Ascending aorta (tissue), 2 donors: ENCODE measurements at regions of chr12 and their contacts with region 1.

Region 1: DNA sequence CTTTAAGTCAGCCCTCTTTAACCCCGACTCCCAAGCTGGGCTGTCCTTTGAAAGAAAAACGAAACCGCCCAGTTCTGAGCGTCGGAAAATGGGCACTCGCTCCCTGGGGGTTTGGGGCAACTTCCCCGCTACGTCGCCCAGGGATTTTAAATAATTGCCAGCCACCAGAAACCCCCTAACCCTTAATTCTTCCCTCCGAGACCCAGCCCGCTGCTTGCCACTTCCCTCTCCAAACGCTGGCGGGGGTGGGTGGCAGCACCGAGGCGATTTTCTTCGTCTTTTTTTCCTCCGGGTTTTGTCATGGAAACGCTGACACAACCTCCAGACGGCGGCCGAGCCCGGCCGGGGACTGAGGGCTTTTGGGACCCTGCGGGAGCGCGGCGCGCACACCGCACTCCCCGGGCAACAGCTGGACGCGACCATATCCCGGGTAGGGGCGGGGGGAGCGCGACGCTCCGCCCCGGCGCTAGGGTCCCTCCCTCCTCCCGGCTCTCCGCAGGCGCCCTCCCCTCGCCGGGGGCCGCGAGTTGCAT is at the start of gene CHST11:
- DNase-seq: peak; percentile 77 to 94
- H3K4me3 ChIP-seq: peak within 1 kb of the TSS; percentile 66 to 96
- H3K27ac ChIP-seq: peak within 1 kb of the TSS; percentile 82 to 96
- H3K4me1 ChIP-seq: peaks cover 2 to 16% of the 10 kb centered on the region in 2 donors
- H3K27me3 ChIP-seq: no peaks in the 10 kb centered on the region
- CTCF ChIP-seq: peak; percentile 42 to 70 (median 60)
- total RNA-seq, gene CHST11: 63.2 TPM

Region 2: DNA sequence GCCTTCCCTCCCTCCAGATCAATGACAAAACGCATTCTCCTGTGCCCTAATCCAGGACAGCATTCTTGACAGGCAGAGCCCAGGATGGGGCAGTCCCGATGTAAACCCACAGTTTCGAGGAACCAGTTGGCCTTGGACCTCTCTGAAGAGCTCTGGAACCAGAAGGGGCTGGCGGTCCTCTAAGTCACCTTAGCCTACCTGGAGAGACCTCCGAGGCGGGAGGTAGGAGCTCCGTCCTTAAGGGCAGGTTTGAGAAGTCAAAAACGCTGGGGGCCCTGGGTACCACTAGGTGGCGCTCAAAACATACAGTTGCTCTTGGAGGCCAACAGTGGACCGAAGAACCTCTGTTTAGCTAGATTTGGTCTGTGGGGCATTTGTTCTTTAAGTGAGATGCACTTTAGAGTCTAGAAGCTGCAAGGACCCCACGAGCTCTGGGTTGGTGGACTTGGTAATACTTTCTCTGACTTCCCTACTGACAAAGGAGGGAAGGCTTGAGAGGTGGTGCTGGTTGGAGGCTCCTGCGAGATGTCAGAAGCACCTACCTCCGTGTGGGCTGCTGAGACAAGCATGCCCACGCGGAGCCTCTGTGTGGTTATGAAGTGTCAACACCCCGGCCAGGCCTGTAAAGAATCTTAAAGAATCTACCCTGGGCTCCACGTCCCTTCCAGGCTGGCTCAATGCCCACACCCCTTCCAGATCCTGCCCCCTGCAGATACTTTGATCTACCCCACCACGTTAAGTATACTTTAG is 74.6 kb before region 1 on chr12:
- intact Hi-C with region 1: loop called (anchors 5 kb)
- DNase-seq: peak; percentile 16 to 85
- H3K4me3 ChIP-seq: peak overlapping the region in 1 of 2 donors; percentile 15
- H3K27ac ChIP-seq: no peak overlapping the region
- H3K4me1 ChIP-seq: peaks cover 0 to 8% of the 10 kb centered on the region in 2 donors
- H3K27me3 ChIP-seq: no peaks in the 10 kb centered on the region
- CTCF ChIP-seq: peak; percentile 88 to 93 (median 93)

Region 3: GRCh38 chr12:104494137-104494792 is 37.8 kb after region 1 on chr12:
- intact Hi-C with region 1: no loop called
- DNase-seq: peak in 1 of 2 donors; percentile 42
- H3K4me3 ChIP-seq: peak overlapping the region; percentile 21 to 47
- H3K27ac ChIP-seq: peak overlapping the region; percentile 4 to 62
- H3K4me1 ChIP-seq: peaks cover 0 to 13% of the 10 kb centered on the region in 2 donors
- H3K27me3 ChIP-seq: no peaks in the 10 kb centered on the region
- CTCF ChIP-seq: no peak

Region 4: DNA sequence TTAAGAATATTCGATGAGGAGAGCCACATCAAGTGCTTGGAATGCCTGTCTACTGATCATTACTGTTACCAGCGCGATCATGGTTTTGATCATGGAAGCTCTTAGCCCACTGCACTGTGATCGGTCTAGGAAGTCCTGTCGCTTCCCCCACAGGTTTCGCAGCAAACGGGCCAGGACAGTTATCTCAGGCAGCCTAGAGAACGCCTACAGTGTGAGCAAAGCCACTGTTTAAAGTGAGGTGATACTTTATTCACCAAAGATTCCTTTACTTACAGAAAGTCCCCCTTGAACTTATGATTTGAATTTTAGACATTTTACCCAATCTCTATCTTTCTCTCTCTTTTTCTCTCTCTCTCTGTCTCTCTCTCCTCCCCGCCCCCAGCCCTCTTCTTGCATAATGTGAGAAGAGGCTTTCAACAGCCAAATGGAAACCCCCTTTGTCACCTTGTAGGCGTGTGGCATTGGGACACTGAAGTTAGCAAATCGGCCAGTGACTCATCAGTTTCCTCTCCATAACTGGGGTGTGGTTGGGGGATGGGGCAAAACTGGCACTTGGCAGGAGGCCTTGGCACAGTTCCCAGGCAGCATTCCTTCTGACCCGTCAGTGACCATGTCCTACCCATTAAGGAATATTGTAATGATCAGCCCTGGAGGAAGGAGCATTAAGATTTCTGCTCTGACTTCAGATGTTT is 215.1 kb after region 1 on chr12:
- intact Hi-C with region 1: loop called (anchors 1 kb)
- DNase-seq: peak; percentile 84 to 96
- H3K4me3 ChIP-seq: peak overlapping the region in 1 of 2 donors; percentile 14
- H3K27ac ChIP-seq: peak overlapping the region; percentile 72 to 85
- H3K4me1 ChIP-seq: peaks cover 25 to 55% of the 10 kb centered on the region in 2 donors
- H3K27me3 ChIP-seq: no peaks in the 10 kb centered on the region
- CTCF ChIP-seq: no peak

Region 5: DNA sequence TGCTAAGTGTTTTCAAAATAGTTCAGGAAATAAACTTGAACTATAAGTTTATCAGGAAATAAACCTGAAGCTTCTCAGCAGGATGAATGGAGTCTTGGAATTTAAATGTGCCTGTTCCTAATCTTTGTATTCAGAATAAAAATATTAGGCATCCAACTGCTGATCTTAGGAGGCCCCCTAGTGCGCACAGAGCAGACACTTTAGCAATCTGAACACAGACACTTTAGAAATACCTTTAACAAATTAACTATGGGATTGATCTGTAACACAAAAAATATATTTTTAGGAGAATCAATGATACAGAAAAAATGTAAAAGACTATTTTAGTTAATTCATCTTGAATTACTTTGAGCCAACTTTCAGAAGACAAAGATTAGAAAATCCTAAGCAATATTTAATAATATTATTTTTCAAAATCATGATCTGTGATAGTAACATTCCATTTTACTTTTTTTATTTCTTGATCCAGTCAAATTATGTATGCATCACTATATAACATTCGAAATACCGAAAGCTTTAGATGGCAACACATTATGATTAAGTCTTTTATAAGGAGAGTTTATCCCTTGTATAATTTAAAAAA is 420.7 kb after region 1 on chr12:
- intact Hi-C with region 1: loop called (anchors 5 kb)
- DNase-seq: no peak
- H3K4me3 ChIP-seq: no peak overlapping the region
- H3K27ac ChIP-seq: no peak overlapping the region
- H3K4me1 ChIP-seq: peaks cover 0 to 2% of the 10 kb centered on the region in 2 donors
- H3K27me3 ChIP-seq: no peaks in the 10 kb centered on the region
- CTCF ChIP-seq: peak; percentile 46 to 83 (median 77)